ENCODE measurements at regions of chr5 and their contacts with region 1.

Region 1: GRCh38 chr5:173573126-173573960 is 43.1 kb downstream of the BOD1 start:
- DNase-seq: peak; percentile 70
- H3K4me3 ChIP-seq: no peak overlapping the region
- H3K27ac ChIP-seq: no peak overlapping the region
- H3K4me1 ChIP-seq: peaks cover 0 to 7% (median 2%) of the 10 kb centered on the region in 4 donors
- H3K27me3 ChIP-seq: peaks cover 8% of the 10 kb centered on the region
- CTCF ChIP-seq: peak; percentile 80 to 98 (median 97)
- EP300 ChIP-seq: no peak
- POLR2A ChIP-seq: no peak

Region 2: GRCh38 chr5:173315495-173316350 is 257.6 kb before region 1 on chr5:
- in situ Hi-C with region 1: loop called in 1 of 4 experiments (anchors 25 kb)
- intact Hi-C with region 1: no loop called
- DNase-seq: no peak
- H3K4me3 ChIP-seq: no peak overlapping the region
- H3K27ac ChIP-seq: peak overlapping the region in 3 of 4 donors; percentile 9 to 36 (median 19)
- H3K4me1 ChIP-seq: peaks cover 3 to 29% (median 5%) of the 10 kb centered on the region in 4 donors
- H3K27me3 ChIP-seq: peaks cover 41% of the 10 kb centered on the region
- CTCF ChIP-seq: no peak
- EP300 ChIP-seq: no peak
- POLR2A ChIP-seq: no peak

Region 3: DNA sequence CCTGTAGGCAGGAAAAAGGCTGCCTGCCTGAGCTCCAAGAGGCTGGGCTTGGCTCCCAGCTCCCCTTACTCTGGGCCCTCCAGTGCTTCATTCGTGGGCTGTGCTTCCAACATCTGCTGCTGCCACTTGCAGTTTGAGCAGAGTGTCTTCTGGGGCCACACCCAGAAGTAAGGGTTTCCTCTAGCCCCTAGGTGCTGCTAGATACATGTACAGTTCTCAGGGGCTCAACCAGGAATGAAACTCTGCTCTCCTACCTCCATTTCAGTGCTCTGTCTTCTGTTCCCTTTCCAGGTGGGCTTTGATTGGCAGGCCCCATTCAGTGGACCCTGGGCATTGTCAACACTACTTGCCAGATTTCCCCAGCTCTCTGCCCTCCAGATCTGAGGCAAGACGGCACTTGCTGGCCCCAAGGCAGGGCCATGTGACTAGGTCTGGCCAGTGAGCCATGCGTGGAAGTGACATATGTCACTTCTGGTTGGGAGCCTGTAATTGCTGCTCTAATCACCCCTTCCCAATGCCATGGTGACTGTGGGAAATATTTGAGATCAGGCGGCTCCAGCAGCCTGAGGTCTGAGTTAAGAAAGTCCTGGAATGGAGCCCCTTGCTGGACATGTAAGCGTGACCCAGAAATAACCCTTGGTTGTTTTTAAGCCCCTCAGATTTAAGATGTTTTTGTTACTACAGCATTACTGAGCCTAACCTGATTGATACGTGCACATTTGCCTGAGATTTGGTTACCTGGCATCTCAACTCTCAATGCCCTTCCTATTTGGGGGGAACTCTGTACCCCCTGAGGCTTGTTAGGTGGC is 52.6 kb after region 1 on chr5:
- in situ Hi-C with region 1: no loop called
- intact Hi-C with region 1: no loop called
- DNase-seq: no peak
- H3K4me3 ChIP-seq: no peak overlapping the region
- H3K27ac ChIP-seq: no peak overlapping the region
- H3K4me1 ChIP-seq: no peaks in the 10 kb centered on the region
- H3K27me3 ChIP-seq: no peaks in the 10 kb centered on the region
- CTCF ChIP-seq: no peak
- EP300 ChIP-seq: no peak
- POLR2A ChIP-seq: no peak

Measured in transverse colon (tissue), 4 donors.